ENCODE measurements at regions of chr5 and their contacts with region 1.

Region 1: GRCh38 chr5:112707187-112708102 is 30.2 kb upstream of the APC start:
- DNase-seq: peak; percentile 98
- H3K4me3 ChIP-seq: peak overlapping the region; percentile 19 to 86 (median 74)
- H3K27ac ChIP-seq: peak overlapping the region; percentile 40
- H3K4me1 ChIP-seq: peaks cover 26% of the 10 kb centered on the region
- H3K27me3 ChIP-seq: no peaks in the 10 kb centered on the region
- CTCF ChIP-seq: no peak
- POLR2A ChIP-seq: peak; percentile 97

Region 2: DNA sequence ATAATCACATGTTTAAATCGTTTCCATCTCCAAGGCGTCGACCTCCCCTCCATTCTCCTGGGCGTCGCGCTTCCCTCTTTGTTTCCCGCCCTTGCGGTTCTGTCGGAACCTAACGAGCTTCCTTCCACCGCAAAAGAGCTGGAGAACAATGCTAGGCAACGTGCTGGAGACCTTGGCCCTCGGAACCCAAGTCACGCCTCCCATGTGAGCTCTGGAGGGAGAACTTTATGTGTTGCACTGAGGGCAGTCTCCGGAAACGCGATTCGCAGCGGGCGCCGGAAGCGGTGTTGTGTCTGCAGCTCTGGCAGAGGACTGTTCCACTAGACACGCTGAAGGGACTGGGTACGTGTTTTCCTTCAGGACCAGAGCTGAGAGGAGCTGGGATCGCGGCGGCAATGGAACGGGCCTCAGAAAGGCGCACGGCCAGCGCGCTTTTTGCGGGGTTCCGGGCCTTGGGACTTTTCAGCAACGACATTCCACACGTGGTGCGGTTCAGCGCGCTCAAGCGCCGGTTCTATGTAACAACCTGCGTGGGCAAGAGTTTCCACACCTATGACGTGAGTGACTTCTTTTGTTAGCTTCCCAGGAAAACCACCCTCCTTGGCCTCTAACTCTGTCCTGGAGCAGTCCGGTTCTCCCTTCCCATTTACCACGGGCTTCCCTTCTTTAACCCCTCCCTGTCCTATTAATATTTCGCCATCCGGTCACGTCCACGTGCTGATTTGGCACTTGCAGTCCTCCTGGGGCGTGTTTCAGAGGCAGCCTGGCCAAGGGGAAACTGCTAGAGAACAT is 1615.2 kb before region 1 on chr5 and contains the start of gene WDR36:
- CTCF ChIA-PET with region 1: no interaction called
- POLR2A ChIA-PET with region 1: no interaction called
- dilution Hi-C with region 1: no loop called
- intact Hi-C with region 1: loop called (anchors 10 kb)
- DNase-seq: peak; percentile 91
- H3K4me3 ChIP-seq: peak within 1 kb of the TSS; percentile 25 to 95 (median 95)
- H3K27ac ChIP-seq: peak within 1 kb of the TSS; percentile 46
- H3K4me1 ChIP-seq: peaks cover 18% of the 10 kb centered on the region
- H3K27me3 ChIP-seq: no peaks in the 10 kb centered on the region
- CTCF ChIP-seq: no peak
- POLR2A ChIP-seq: peak; percentile 58
- total RNA-seq, gene WDR36: 30.2 and 33.8 TPM in 2 replicates

Region 3: DNA sequence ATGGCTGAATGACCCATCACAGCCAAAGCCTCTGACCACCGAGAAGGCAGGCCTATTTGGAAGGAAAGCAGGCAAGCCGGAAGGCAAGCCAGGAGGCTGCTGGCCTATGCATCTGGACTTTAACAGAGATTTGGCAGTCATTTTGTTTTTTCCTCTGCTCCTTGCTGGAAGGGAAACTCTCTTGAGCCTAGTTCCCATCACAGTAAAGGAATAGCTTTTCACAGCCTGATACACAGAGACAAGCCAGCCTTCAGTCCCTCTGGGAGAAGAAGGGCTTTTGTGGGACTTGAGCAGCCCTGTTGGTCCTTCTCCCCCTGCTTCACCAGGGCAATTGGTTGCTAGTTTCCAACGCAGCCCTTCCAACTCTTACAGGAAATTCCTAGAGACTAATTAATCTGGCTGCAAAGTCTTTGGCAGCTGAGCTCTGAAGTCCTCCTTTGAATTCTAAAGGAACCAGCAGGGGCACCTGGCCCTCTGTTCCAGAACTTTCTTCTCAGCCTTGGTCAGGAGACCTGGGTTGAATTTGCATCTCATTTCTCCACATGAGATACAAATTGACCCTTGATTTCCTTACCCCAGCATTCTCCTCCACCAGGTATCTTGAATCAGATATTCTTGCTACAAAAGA is 131.0 kb before region 1 on chr5:
- CTCF ChIA-PET with region 1: no interaction called
- POLR2A ChIA-PET with region 1: no interaction called
- dilution Hi-C with region 1: no loop called
- intact Hi-C with region 1: no loop called
- DNase-seq: peak; percentile 85
- H3K4me3 ChIP-seq: no peak overlapping the region
- H3K27ac ChIP-seq: no peak overlapping the region
- H3K4me1 ChIP-seq: no peaks in the 10 kb centered on the region
- H3K27me3 ChIP-seq: no peaks in the 10 kb centered on the region
- CTCF ChIP-seq: no peak
- POLR2A ChIP-seq: no peak

Region 4: DNA sequence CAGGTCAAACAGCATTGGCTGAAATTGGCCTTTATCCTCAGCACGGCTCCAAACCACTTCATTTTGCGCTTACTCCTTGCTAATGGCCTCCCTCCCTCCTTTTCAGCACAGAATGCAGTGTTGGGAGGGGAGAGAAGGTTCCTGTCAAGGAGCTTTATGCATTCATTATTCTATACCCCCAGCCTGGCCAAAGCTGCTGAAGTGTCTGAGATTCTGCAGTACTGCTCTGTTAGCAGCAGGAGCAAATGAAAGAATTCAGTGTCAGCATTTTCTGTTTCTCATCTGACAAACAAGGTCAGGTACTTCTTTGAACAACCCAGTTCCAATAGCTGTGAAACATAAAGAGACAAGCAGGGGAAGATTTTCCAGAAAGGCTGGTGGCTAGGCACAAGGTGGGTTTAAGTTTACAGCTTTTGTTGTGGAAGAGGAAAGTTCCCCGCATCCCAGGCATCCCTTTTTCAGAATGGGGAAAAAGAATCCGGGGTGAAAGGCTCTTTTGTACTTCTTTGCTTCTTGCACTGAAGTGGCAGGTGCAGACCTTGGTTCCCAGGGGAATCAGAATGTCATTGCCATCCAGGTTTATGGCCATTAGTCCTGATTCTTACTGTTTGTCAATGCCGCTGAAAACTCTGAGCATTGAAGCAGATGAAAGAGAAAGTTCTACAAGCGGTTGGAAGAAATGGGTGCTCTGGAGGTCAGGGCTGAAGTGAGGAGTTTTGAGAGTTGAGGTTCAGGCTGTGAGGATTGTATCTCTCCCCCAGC is 79.0 kb before region 1 on chr5:
- CTCF ChIA-PET with region 1: no interaction called
- POLR2A ChIA-PET with region 1: no interaction called
- dilution Hi-C with region 1: no loop called
- intact Hi-C with region 1: no loop called
- DNase-seq: no peak
- H3K4me3 ChIP-seq: no peak overlapping the region
- H3K27ac ChIP-seq: no peak overlapping the region
- H3K4me1 ChIP-seq: no peaks in the 10 kb centered on the region
- H3K27me3 ChIP-seq: peaks cover 5 to 13% of the 10 kb centered on the region in 2 experiments
- CTCF ChIP-seq: no peak
- POLR2A ChIP-seq: no peak

Region 5: DNA sequence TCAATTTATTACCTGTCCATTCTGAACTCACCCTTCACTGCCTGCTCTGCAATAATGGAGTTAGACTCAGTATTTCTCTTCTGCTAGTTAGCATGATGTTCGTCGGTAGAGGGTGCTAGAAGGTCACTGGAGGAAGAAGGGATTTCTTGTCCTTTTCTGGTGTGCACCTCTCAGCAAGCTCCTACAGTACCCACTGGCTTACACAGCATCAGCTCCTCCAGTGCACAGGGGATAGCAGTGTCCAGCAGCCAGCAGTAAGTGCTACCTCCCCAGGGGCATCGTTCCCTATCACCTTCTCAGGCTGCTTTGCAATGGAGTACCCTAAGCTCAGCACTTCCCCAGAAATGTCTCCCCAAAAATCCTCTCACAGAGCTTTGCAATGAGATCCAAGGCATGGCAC is 15.7 kb before region 1 on chr5:
- CTCF ChIA-PET with region 1: interaction called, 17 read pairs
- POLR2A ChIA-PET with region 1: no interaction called
- dilution Hi-C with region 1: no loop called
- intact Hi-C with region 1: no loop called
- DNase-seq: peak; percentile 43
- H3K4me3 ChIP-seq: no peak overlapping the region
- H3K27ac ChIP-seq: no peak overlapping the region
- H3K4me1 ChIP-seq: no peaks in the 10 kb centered on the region
- H3K27me3 ChIP-seq: peaks cover 10 to 12% of the 10 kb centered on the region in 2 experiments
- CTCF ChIP-seq: peak; percentile 33 to 41
- POLR2A ChIP-seq: no peak

Region 6: GRCh38 chr5:112737463-112738190 is 30.2 kb after region 1 on chr5 and contains the start of gene APC:
- CTCF ChIA-PET with region 1: interaction called, 5 read pairs
- POLR2A ChIA-PET with region 1: no interaction called
- dilution Hi-C with region 1: no loop called
- intact Hi-C with region 1: loop called (anchors 1 kb)
- DNase-seq: peak; percentile 91
- H3K4me3 ChIP-seq: peak within 1 kb of the TSS; percentile 57 to 83 (median 63)
- H3K27ac ChIP-seq: peak within 1 kb of the TSS; percentile 57
- H3K4me1 ChIP-seq: peaks cover 32% of the 10 kb centered on the region
- H3K27me3 ChIP-seq: no peaks in the 10 kb centered on the region
- CTCF ChIP-seq: no peak
- POLR2A ChIP-seq: peak; percentile 34
- total RNA-seq, gene APC: 39.6 and 42.0 TPM in 2 replicates

Measured in endothelial cell of umbilical vein (primary cell).